ENCODE measurements at regions of chr5 and their contacts with region 1.

Region 1: DNA sequence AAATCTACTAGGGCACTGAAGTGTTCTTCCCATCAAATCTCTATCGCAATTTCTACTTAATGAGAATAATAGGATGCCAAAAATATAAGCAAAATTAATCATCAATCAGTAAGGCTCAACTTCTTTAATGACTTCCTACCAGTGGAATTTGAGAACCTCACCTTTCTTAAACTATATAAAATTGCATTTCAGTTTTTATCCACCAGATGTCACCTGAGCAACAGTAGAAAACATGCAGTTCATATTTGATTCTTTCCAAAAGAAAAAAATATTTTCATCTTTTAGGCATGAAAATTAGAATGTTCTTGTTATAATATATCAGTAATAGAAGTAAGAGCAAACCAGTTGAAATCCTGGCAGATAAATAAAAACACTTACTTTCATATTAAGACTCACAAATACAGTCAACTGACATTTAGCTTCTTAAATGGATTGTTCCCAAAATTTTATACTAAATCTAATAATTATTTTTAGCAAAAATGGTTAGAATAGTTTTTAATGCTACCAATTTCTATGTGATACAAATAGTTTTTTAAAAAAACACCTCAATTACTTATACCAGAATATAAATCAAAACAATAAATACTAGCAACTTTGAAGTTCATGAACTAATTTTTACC is 13.4 kb upstream of the CCDC112 start:
- DNase-seq: no peak
- H3K4me3 Mint-ChIP-seq: no peak overlapping the region
- H3K27ac Mint-ChIP-seq: no peak overlapping the region
- H3K4me1 Mint-ChIP-seq: peaks cover 21% of the 10 kb centered on the region
- H3K27me3 Mint-ChIP-seq: no peaks in the 10 kb centered on the region
- CTCF ChIP-seq: peak; percentile 63

Region 2: DNA sequence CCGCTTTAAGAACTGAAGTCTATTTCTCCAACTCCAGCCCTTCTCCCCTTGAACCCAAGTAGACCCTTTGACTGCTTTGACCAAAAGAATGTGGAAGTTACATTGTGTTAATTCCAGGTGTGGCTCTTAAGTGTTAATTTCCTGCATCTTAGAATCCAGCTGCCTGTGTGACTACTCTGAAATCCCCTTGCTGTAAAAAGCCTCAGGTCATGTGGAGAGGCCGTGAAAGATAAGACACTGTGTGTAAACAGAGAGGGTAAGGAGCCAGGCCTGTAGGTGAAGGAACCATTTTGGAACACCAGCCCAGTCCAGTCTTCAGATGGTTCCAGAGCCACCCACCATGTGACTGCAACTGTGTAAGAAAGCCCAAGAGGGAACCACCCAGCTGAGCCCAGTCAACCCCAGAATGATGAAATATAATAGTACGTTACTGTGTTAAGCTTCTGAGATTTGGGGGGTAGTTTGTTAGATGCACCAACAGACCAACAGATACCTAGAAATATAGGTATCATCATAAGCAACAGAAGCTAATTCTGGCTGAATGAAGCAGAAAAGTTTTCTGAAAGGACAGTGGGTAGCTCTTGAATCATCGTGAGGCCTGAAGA is 46.0 kb after region 1 on chr5:
- CTCF ChIA-PET with region 1: no interaction called
- intact Hi-C with region 1: loop called (anchors 5 kb)
- DNase-seq: no peak
- H3K4me3 Mint-ChIP-seq: no peak overlapping the region
- H3K27ac Mint-ChIP-seq: no peak overlapping the region
- H3K4me1 Mint-ChIP-seq: peaks cover 46% of the 10 kb centered on the region
- H3K27me3 Mint-ChIP-seq: no peaks in the 10 kb centered on the region
- CTCF ChIP-seq: no peak

Region 3: GRCh38 chr5:115372146-115372545 is 62.3 kb after region 1 on chr5:
- CTCF ChIA-PET with region 1: interaction called, 5 read pairs
- intact Hi-C with region 1: loop called (anchors 1 kb)
- DNase-seq: no peak
- H3K4me3 Mint-ChIP-seq: no peak overlapping the region
- H3K27ac Mint-ChIP-seq: no peak overlapping the region
- H3K4me1 Mint-ChIP-seq: peaks cover 33% of the 10 kb centered on the region
- H3K27me3 Mint-ChIP-seq: no peaks in the 10 kb centered on the region
- CTCF ChIP-seq: no peak

Region 4: DNA sequence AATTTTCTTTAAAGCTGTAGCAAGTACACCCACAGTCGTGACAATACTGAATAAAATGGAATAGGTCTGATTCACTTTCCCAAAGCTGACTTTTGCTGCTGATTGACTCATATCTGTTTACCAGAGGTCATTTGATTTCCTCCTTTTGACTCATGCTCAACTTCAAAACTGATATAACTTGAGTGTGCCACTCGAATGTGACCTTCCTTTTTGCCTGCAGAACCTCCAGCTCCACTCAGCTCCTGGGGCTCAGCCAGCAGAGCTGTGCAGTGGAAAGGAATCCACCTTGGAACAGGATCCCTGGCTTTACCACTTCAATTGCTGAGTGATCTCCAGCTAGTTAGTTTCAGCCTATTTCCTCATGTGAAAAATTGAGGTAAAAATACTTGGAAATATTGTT is 150.6 kb after region 1 on chr5:
- CTCF ChIA-PET with region 1: no interaction called
- intact Hi-C with region 1: loop called (anchors 5 kb)
- DNase-seq: peak; percentile 60
- H3K4me3 Mint-ChIP-seq: no peak overlapping the region
- H3K27ac Mint-ChIP-seq: no peak overlapping the region
- H3K4me1 Mint-ChIP-seq: peaks cover 18% of the 10 kb centered on the region
- H3K27me3 Mint-ChIP-seq: no peaks in the 10 kb centered on the region
- CTCF ChIP-seq: no peak

Region 5: DNA sequence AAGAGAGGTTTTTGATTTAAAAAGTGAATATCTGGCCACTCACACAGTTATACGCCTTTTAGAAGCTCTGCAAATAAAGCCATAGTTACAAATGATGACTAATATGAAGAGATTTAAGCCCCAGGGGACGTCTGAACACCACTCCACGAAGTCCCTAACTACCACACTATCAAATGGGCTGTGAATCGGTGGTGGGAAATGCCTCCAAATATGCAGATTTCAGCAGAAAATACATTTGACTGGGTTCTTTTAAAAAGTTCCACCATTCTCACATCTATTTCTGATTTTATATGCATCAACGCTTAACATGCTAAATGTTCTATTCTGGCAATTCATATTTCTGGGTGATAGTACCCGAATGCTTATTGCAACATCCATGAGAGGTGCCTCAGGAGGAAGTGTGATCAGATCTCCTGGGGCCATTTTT is 269.9 kb after region 1 on chr5:
- CTCF ChIA-PET with region 1: interaction called, 35 read pairs
- intact Hi-C with region 1: loop called (anchors 1 kb)
- DNase-seq: no peak
- H3K4me3 Mint-ChIP-seq: no peak overlapping the region
- H3K27ac Mint-ChIP-seq: no peak overlapping the region
- H3K4me1 Mint-ChIP-seq: peaks cover 13% of the 10 kb centered on the region
- H3K27me3 Mint-ChIP-seq: no peaks in the 10 kb centered on the region
- CTCF ChIP-seq: no peak

Region 6: DNA sequence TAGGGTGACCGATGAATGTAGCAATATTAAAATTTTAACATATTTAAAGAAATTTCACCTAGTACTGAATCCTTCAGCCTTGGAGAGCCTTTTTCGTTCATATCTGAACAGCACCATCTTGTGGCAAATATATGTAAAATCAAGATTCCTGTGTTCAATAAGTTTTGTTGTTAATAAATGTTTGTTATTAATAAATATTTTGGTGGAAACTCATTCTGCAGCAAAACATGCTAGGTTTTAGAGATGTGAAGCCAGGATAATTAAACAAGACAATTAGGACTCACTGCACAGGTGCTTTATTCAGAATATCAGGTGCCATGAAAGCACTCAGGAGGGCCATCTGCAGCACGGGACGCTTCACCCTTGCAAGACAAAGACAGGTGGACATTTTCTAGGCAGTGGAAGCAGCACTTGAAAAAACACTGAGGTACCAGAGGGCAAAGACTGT is 276.8 kb after region 1 on chr5:
- CTCF ChIA-PET with region 1: interaction called, 3 read pairs
- intact Hi-C with region 1: loop called (anchors 1 kb)
- DNase-seq: no peak
- H3K4me3 Mint-ChIP-seq: no peak overlapping the region
- H3K27ac Mint-ChIP-seq: no peak overlapping the region
- H3K4me1 Mint-ChIP-seq: no peaks in the 10 kb centered on the region
- H3K27me3 Mint-ChIP-seq: no peaks in the 10 kb centered on the region
- CTCF ChIP-seq: peak; percentile 54

Region 7: GRCh38 chr5:115831163-115831768 is 521.4 kb after region 1 on chr5:
- CTCF ChIA-PET with region 1: no interaction called
- intact Hi-C with region 1: no loop called
- DNase-seq: peak; percentile 46
- H3K4me3 Mint-ChIP-seq: no peak overlapping the region
- H3K27ac Mint-ChIP-seq: no peak overlapping the region
- H3K4me1 Mint-ChIP-seq: peaks cover 26% of the 10 kb centered on the region
- H3K27me3 Mint-ChIP-seq: no peaks in the 10 kb centered on the region
- CTCF ChIP-seq: peak; percentile 70